PC-9 (cell line): ENCODE measurements at regions of chr7 and their contacts with region 1.

Region 1: DNA sequence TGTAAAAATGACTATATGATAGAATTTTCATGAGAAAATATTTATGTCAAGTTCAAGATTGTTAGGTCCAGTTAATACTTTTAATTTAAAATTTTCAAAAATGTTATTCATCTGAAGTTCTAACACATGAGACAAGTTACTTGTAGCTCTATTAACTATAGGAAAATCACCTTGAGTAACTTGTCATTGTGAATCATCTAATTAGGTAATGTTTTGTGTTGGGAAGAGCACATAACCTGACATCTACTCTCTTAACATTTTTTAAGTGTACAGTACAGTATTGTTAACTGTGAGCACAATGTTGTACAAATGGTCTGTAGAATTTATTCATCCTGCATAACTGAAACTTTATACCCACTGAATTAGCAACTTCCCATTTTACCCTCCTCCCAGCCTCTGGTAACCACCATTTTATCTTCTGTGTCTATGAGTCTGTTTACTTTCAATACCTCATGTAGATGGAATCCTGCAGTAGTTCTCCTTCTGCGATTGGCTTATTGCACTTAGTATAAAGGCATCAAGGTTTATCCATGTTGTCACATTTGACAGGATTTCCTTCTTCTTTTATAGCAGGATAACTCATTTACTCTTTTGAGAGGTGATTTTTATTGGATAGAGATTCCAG is 54.6 kb downstream of the ARL4A start:
- DNase-seq: no peak
- H3K4me3 ChIP-seq: no peak overlapping the region
- H3K27ac ChIP-seq: no peak overlapping the region
- H3K4me1 ChIP-seq: peaks cover 14% of the 10 kb centered on the region
- H3K27me3 ChIP-seq: no peaks in the 10 kb centered on the region
- CTCF ChIP-seq: no peak

Region 2: GRCh38 chr7:12695965-12696364 is 46.1 kb before region 1 on chr7:
- CTCF ChIA-PET with region 1: no interaction called
- POLR2A ChIA-PET with region 1: interaction called, 3 read pairs
- intact Hi-C with region 1: loop called (anchors 5 kb)
- DNase-seq: no peak
- H3K4me3 ChIP-seq: no peak overlapping the region
- H3K27ac ChIP-seq: no peak overlapping the region
- H3K4me1 ChIP-seq: peaks cover 12% of the 10 kb centered on the region
- H3K27me3 ChIP-seq: no peaks in the 10 kb centered on the region
- CTCF ChIP-seq: no peak

Region 3: GRCh38 chr7:12706876-12707536 is 35.1 kb before region 1 on chr7:
- CTCF ChIA-PET with region 1: interaction called, 19 read pairs
- POLR2A ChIA-PET with region 1: no interaction called
- intact Hi-C with region 1: no loop called
- DNase-seq: no peak
- H3K4me3 ChIP-seq: no peak overlapping the region
- H3K27ac ChIP-seq: 0 out of 2 replicates have a peak overlapping the region, but pooled peaks have one; percentile 12
- H3K4me1 ChIP-seq: peaks cover 13% of the 10 kb centered on the region
- H3K27me3 ChIP-seq: no peaks in the 10 kb centered on the region
- CTCF ChIP-seq: no peak